GM12878 (cell line): ENCODE measurements at regions of chr1 and their contacts with region 1.

Region 1: DNA sequence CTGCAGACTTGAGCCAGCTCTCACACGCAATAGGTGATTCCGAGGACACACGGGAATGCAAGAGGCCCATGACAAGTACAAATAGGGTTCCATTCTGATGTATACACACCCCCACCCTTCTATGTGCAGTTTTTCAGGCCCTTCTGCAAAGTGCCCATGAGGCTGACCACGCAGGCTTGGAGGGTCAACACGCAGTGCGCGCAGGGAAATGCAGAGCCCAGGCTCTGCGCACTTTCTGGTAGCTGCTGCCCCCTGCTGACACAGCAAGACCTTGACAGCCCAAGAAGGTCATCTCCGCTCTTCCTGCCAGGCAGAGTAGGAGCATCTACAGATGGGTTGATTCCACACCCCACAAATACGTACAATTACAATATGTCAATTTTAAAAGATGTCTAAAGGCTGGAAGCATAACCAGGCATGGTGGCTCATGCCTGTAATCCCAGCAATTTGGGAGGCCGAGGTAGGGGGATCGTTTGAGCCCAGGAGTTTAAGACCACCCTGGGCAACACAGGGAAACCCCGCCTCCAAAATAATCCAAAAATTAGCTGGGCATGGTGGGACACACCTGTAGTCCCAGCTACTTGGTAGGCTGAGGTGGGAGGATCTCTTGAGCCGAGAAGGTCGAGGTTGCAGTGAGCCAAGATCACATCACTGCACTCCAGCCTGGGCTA is 18.5 kb downstream of the SH3BP5L start:
- DNase-seq: no peak
- ATAC-seq: peak; percentile 79
- H3K4me3 ChIP-seq: no peak overlapping the region
- H3K27ac ChIP-seq: no peak overlapping the region
- H3K4me1 ChIP-seq: peaks cover 24% of the 10 kb centered on the region
- H3K27me3 ChIP-seq: no peaks in the 10 kb centered on the region
- CTCF ChIP-seq: peak; percentile 91 to 96 (median 95)
- EP300 ChIP-seq: no peak
- POLR2A ChIP-seq: 0 out of 2 replicates have a peak, but pooled peaks have one; percentile 23
- RAD21 ChIP-seq: peak; percentile 99

Region 2: GRCh38 chr1:247131236-247131635 is 1676.0 kb before region 1 on chr1:
- CTCF ChIA-PET with region 1: no interaction called
- POLR2A ChIA-PET with region 1: no interaction called
- RAD21 ChIA-PET with region 1: no interaction called
- SMC1A ChIA-PET with region 1: no interaction called
- in situ Hi-C with region 1: no loop called
- intact Hi-C with region 1: no loop called
- DNase-seq: no peak
- ATAC-seq: no peak
- H3K4me3 ChIP-seq: no peak overlapping the region
- H3K27ac ChIP-seq: no peak overlapping the region
- H3K4me1 ChIP-seq: no peaks in the 10 kb centered on the region
- H3K27me3 ChIP-seq: no peaks in the 10 kb centered on the region
- CTCF ChIP-seq: no peak
- EP300 ChIP-seq: no peak
- POLR2A ChIP-seq: no peak
- RAD21 ChIP-seq: no peak

Region 3: GRCh38 chr1:248404024-248404423 is 403.2 kb before region 1 on chr1:
- CTCF ChIA-PET with region 1: interaction called, 44 read pairs
- POLR2A ChIA-PET with region 1: interaction called, 8 read pairs
- RAD21 ChIA-PET with region 1: interaction called, 45 read pairs
- SMC1A ChIA-PET with region 1: interaction called, 61 read pairs
- in situ Hi-C with region 1: loop called (anchors 5 kb)
- intact Hi-C with region 1: loop called (anchors 1 kb)
- DNase-seq: peak; percentile 76
- ATAC-seq: no peak
- H3K4me3 ChIP-seq: no peak overlapping the region
- H3K27ac ChIP-seq: no peak overlapping the region
- H3K4me1 ChIP-seq: peaks cover 8% of the 10 kb centered on the region
- H3K27me3 ChIP-seq: no peaks in the 10 kb centered on the region
- CTCF ChIP-seq: peak; percentile 5 to 39 (median 22); a peak in 5 of 6 replicates
- EP300 ChIP-seq: no peak
- POLR2A ChIP-seq: no peak
- RAD21 ChIP-seq: peak; percentile 51

Region 4: GRCh38 chr1:248696261-248696660 is 110.9 kb before region 1 on chr1:
- CTCF ChIA-PET with region 1: interaction called, 86 read pairs
- POLR2A ChIA-PET with region 1: no interaction called
- RAD21 ChIA-PET with region 1: interaction called, 72 read pairs
- SMC1A ChIA-PET with region 1: interaction called, 60 read pairs
- in situ Hi-C with region 1: loop called (anchors 5 kb)
- intact Hi-C with region 1: loop called (anchors 1 kb)
- DNase-seq: no peak
- ATAC-seq: peak; percentile 86
- H3K4me3 ChIP-seq: no peak overlapping the region
- H3K27ac ChIP-seq: no peak overlapping the region
- H3K4me1 ChIP-seq: no peaks in the 10 kb centered on the region
- H3K27me3 ChIP-seq: no peaks in the 10 kb centered on the region
- CTCF ChIP-seq: peak; percentile 27 to 63 (median 35); a peak in 4 of 6 replicates
- EP300 ChIP-seq: no peak
- POLR2A ChIP-seq: no peak
- RAD21 ChIP-seq: peak; percentile 55

Region 5: DNA sequence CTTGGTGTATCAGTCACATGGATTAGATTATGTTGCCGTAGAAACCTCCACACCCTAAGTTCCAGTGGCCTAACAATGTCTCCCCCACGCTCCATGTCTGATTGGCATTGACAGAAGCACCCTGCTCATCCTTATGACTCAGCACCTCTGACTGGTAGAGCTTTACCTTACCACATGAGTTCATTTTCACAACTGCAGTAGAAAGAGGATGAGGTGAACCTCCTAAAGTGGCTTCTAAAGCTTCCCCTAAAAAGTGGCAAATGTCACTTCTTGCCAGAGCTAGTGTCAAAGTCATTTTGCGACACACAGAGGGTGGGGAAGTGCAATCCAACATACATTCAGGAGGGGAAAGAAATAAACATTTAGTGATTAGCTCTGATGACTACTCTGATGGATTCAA is 21.0 kb before region 1 on chr1:
- CTCF ChIA-PET with region 1: interaction called, 11 read pairs
- POLR2A ChIA-PET with region 1: interaction called, 6 read pairs
- RAD21 ChIA-PET with region 1: interaction called, 11 read pairs
- SMC1A ChIA-PET with region 1: interaction called, 89 read pairs
- in situ Hi-C with region 1: no loop called
- intact Hi-C with region 1: no loop called
- DNase-seq: no peak
- ATAC-seq: peak; percentile 95
- H3K4me3 ChIP-seq: no peak overlapping the region
- H3K27ac ChIP-seq: no peak overlapping the region
- H3K4me1 ChIP-seq: no peaks in the 10 kb centered on the region
- H3K27me3 ChIP-seq: no peaks in the 10 kb centered on the region
- CTCF ChIP-seq: no peak
- EP300 ChIP-seq: no peak
- POLR2A ChIP-seq: no peak
- RAD21 ChIP-seq: no peak

Region 6: DNA sequence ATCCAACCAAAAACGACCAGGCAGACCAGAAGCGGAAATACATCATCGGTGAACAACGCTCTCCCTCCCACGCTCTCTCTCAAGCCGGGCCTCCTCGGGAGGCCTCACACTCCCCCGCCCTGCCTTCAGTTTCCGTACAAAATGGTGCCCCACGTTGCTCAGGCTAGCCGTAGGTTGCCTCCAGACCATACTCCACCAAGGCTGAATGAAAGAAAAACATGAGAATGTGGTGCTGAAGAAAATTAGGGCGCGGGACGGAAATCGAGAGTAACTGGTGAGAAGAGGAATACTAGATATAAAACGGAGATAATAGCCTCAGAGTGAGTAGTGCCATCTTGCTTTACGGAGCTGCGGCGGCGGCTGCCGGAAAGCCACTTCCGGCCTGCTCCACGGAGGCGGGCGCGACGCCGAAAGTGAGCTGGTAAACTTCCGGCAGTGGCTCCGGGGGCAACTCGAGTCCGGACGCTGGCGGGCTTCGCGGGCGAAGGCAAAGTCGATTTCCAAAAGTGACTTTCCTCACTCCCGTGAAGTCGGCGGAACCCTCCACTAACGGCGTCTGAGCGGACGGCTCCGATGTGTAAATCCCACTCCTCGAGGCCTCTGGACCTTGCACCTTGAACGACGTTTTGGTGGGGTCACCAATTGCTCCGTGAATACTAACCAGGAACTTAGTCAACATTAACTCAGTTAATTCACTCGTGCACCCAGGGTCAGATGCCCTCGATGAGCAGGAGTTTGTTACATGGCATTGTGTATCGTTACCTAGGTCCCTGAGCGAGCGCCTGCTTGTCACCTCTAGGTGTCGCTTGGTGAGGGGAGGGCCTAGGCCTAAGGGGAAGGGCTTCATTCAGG is 18.9 kb after region 1 on chr1 and contains the start of gene SH3BP5L:
- CTCF ChIA-PET with region 1: interaction called, 15 read pairs
- POLR2A ChIA-PET with region 1: interaction called, 10 read pairs
- RAD21 ChIA-PET with region 1: interaction called, 31 read pairs
- SMC1A ChIA-PET with region 1: interaction called, 36 read pairs
- in situ Hi-C with region 1: no loop called
- intact Hi-C with region 1: no loop called
- DNase-seq: peak; percentile 85
- ATAC-seq: peak; percentile 91
- H3K4me3 ChIP-seq: peak within 1 kb of the TSS; percentile 79
- H3K27ac ChIP-seq: peak within 1 kb of the TSS; percentile 98
- H3K4me1 ChIP-seq: peaks cover 13% of the 10 kb centered on the region
- H3K27me3 ChIP-seq: no peaks in the 10 kb centered on the region
- CTCF ChIP-seq: peak; percentile 83 to 89 (median 84); a peak in 5 of 6 replicates
- EP300 ChIP-seq: no peak
- POLR2A ChIP-seq: peak; percentile 82
- RAD21 ChIP-seq: peak; percentile 51; the same call in 1 of the 2 replicates
- polyA plus RNA-seq, gene SH3BP5L: 1.1 to 1.6 TPM